Breast epithelium (tissue), 4 donors: ENCODE measurements at regions of chr4 and their contacts with region 1.

Region 1: GRCh38 chr4:85457752-85458467 is 17.0 kb upstream of the ARHGAP24 start:
- DNase-seq: no peak
- H3K4me3 ChIP-seq: no peak overlapping the region
- H3K27ac ChIP-seq: peak overlapping the region in 1 of 2 donors; percentile 6
- H3K4me1 ChIP-seq: no peaks in the 10 kb centered on the region
- H3K27me3 ChIP-seq: no peaks in the 10 kb centered on the region
- CTCF ChIP-seq: no peak
- POLR2A ChIP-seq: no peak

Region 2: DNA sequence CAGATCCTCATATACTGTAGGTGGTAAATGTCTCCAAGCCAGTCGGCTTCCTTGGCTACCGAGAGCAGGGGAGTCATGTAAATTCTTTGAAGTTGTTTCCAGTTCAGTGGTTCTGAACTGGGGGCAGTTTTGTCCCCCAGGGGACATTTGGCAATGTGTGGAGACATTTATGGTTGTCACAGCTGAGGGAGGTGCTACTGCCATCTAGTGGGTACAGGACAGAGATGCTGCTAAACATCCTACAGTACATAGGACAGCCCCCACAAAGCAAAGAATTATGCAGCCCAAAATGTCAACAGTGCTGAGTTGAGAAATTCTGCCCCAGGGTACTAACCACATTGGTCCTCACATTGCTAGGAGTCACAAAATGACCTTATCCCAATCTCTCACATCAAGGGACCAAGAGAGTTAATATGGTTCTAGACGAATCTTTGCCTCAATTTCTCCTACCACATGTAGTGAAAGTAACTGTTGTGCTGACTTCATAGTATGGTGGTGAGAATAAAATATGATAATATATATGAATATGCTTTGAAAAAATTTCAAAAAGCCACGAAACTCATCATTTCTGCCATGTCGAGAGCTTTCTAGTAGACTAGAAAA is 87.4 kb before region 1 on chr4:
- intact Hi-C with region 1: no loop called
- DNase-seq: no peak
- H3K4me3 ChIP-seq: no peak overlapping the region
- H3K27ac ChIP-seq: no peak overlapping the region
- H3K4me1 ChIP-seq: no peaks in the 10 kb centered on the region
- H3K27me3 ChIP-seq: no peaks in the 10 kb centered on the region
- CTCF ChIP-seq: peak in 2 of 3 donors; percentile 18 to 32
- POLR2A ChIP-seq: no peak

Region 3: DNA sequence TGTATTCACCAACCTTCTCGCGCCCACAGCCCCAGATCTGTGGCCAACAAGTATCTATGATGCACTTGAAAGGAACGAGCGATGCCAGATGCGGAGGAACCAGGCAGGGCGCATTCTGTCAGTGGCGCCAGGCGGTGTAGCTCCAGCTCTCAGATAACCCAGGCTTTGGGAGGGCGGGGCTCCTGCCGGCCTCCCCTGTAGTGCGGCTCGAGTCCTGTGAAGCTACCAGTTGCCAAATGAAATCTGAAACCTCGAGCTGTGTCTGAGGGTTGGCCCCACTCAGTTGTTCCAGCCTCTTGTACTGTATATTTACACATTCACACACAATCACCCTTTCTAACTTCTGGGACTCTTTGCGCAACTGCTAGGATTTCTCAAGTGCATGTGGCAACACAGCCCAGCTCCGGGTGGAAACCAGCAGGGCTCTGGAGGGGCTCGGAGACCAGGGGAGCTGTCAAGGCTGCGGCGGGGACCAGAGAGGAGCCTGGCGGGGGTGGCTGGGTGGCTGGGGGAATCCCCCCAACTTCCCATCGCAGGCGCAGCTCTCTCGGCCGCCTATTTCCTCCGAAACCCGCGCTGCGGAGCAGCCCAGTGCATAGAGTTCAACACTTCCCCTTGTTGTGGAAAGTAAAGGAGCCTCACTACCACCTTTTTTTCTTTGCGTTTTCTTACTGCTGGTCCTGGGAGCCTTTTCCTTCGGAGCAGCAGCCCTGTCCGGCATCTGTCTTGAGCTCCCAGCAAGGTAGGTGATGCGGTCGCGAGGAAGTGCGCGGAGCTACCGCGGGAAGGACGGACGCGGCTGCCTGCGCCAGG is 17.1 kb after region 1 on chr4 and contains the start of gene ARHGAP24:
- intact Hi-C with region 1: loop called (anchors 1 kb)
- DNase-seq: peak; percentile 54 to 73
- H3K4me3 ChIP-seq: peak within 1 kb of the TSS; percentile 62 to 76 (median 66)
- H3K27ac ChIP-seq: peak within 1 kb of the TSS; percentile 77 to 88
- H3K4me1 ChIP-seq: no peaks in the 10 kb centered on the region
- H3K27me3 ChIP-seq: no peaks in the 10 kb centered on the region
- CTCF ChIP-seq: no peak
- POLR2A ChIP-seq: peak; percentile 33
- total RNA-seq, gene ARHGAP24: 20.6 to 60.2 (median 37.2) TPM

Region 4: DNA sequence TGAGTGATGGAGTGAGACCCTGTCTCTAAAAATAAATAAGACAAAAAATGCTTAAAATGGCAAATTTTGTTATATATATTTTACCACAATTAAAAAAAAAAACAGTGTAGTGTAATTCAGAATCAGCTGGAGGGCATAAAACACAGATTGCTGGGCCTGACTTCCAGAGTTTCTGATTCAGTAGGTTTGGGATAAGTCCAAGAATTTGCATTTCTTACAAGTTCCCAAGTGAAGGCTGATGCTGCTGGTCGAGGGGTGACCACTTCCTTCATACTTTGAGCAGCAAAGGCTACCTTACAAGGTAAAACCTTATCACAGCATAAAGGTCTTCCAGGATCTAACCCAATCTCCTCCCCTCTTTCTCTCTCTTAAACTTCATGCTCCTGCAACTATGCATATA is 1721.8 kb after region 1 on chr4:
- intact Hi-C with region 1: no loop called
- DNase-seq: no peak
- H3K4me3 ChIP-seq: no peak overlapping the region
- H3K27ac ChIP-seq: no peak overlapping the region
- H3K4me1 ChIP-seq: no peaks in the 10 kb centered on the region
- H3K27me3 ChIP-seq: no peaks in the 10 kb centered on the region
- CTCF ChIP-seq: no peak
- POLR2A ChIP-seq: no peak

Region 5: GRCh38 chr4:87363567-87363966 is 1905.7 kb after region 1 on chr4:
- intact Hi-C with region 1: loop called (anchors 10 kb)
- DNase-seq: no peak
- H3K4me3 ChIP-seq: no peak overlapping the region
- H3K27ac ChIP-seq: no peak overlapping the region
- H3K4me1 ChIP-seq: no peaks in the 10 kb centered on the region
- H3K27me3 ChIP-seq: no peaks in the 10 kb centered on the region
- CTCF ChIP-seq: no peak
- POLR2A ChIP-seq: no peak